Heart right ventricle (tissue), 16 donors: ENCODE measurements at regions of chr11 and their contacts with region 1.

Region 1: DNA sequence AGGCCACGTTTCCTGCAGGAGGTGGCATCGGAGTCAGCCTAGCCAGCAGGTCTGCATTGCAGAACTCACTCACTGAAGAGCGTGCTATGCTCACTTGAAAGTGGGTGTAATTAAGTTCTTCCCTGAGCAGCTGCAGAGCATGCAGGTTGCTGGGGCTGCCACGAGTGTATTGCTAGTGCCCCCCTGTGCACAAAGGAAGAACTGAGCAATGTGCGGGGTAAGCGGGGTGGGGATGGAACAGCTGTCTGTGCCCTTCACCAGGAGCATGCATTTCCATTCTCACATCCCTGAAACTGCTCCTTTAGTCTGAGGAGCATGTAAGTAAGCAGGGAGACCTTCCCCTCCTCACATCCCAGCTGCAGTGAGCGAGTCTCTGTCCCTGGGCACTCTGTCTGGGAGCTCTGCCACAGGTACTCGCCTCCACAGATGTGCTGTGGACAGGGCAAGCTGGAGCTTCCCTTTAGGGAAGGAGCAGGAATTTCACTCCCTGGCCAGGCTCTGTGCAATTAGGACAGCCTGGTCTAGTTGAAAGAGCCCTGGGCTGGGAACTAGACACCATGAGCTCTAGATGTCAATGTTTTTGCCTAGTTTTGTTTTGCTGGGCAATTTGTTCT is 1031.8 kb downstream of the NTM start:
- DNase-seq: peak; percentile 13 to 17
- ATAC-seq: peak in 7 of 8 donors; percentile 49 to 89 (median 75)
- H3K4me3 ChIP-seq: no peak overlapping the region
- H3K27ac ChIP-seq: no peak overlapping the region
- H3K4me1 ChIP-seq: no peaks in the 10 kb centered on the region
- H3K27me3 ChIP-seq: peaks cover 0 to 59% (median 29%) of the 10 kb centered on the region in 7 donors
- CTCF ChIP-seq: peak; percentile 10 to 60 (median 44)

Region 2: GRCh38 chr11:131874070-131874469 is 528.1 kb before region 1 on chr11:
- intact Hi-C with region 1: loop called in 4 of 10 experiments (anchors 5 to 10 kb)
- DNase-seq: no peak
- ATAC-seq: no peak
- H3K4me3 ChIP-seq: no peak overlapping the region
- H3K27ac ChIP-seq: no peak overlapping the region
- H3K4me1 ChIP-seq: no peaks in the 10 kb centered on the region
- H3K27me3 ChIP-seq: peaks cover 0 to 12% (median 0%) of the 10 kb centered on the region in 7 donors
- CTCF ChIP-seq: no peak

Region 3: GRCh38 chr11:131910523-131911387 is 491.4 kb before region 1 on chr11:
- intact Hi-C with region 1: no loop called
- DNase-seq: no peak
- ATAC-seq: peak in 4 of 8 donors; percentile 9 to 70 (median 24)
- H3K4me3 ChIP-seq: peak overlapping the region in 9 of 10 donors; percentile 31 to 53 (median 51)
- H3K27ac ChIP-seq: peak overlapping the region in 5 of 10 donors; percentile 1 to 75 (median 39)
- H3K4me1 ChIP-seq: peaks cover 0 to 5% (median 0%) of the 10 kb centered on the region in 9 donors
- H3K27me3 ChIP-seq: peaks cover 0 to 87% (median 64%) of the 10 kb centered on the region in 7 donors
- CTCF ChIP-seq: no peak

Region 4: GRCh38 chr11:132337819-132338416 is 64.3 kb before region 1 on chr11:
- intact Hi-C with region 1: no loop called
- DNase-seq: no peak
- ATAC-seq: no peak
- H3K4me3 ChIP-seq: no peak overlapping the region
- H3K27ac ChIP-seq: no peak overlapping the region
- H3K4me1 ChIP-seq: peaks cover 0 to 13% (median 0%) of the 10 kb centered on the region in 9 donors
- H3K27me3 ChIP-seq: no peaks in the 10 kb centered on the region
- CTCF ChIP-seq: no peak

Region 5: DNA sequence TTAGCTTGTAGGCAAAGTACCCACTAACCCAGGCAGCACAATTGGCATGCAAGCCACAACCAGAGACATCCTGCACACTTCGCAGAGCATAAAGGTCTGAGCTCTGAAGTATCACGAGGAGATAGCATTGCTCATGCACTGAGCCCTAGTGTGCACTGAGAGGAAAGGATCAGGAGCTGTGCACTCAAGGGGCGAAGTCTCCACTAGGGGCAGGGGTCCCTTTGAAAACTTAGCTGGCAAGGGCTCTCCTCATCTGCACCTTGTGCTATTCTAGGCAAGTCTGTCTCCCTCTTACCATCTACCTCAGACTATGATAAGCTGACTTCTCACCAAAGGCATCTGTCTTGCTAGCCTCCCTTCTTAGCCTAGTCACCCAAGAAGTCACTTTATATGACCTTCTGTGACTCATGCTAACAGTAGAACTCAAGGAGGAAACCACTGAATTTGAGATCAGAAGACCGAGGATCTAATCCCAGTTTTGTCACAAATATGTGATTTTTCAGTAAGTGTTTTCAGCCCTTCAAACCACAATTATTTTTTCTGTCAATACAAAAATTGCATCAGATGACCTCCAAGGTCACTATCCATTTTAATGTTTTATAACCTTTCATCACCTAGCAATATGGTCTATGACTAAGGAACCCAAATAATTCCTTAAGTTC is 46.3 kb after region 1 on chr11:
- intact Hi-C with region 1: no loop called
- DNase-seq: no peak
- ATAC-seq: no peak
- H3K4me3 ChIP-seq: no peak overlapping the region
- H3K27ac ChIP-seq: no peak overlapping the region
- H3K4me1 ChIP-seq: no peaks in the 10 kb centered on the region
- H3K27me3 ChIP-seq: peaks cover 0 to 22% (median 0%) of the 10 kb centered on the region in 7 donors
- CTCF ChIP-seq: no peak

Region 6: GRCh38 chr11:132866783-132867545 is 464.8 kb after region 1 on chr11:
- intact Hi-C with region 1: no loop called
- DNase-seq: no peak
- ATAC-seq: no peak
- H3K4me3 ChIP-seq: no peak overlapping the region
- H3K27ac ChIP-seq: no peak overlapping the region
- H3K4me1 ChIP-seq: no peaks in the 10 kb centered on the region
- H3K27me3 ChIP-seq: peaks cover 0 to 7% (median 0%) of the 10 kb centered on the region in 7 donors
- CTCF ChIP-seq: no peak